ENCODE measurements at regions of chr1 and their contacts with region 1.

Region 1: GRCh38 chr1:42913426-42914091 is 45.1 kb downstream of the SLC2A1 start:
- DNase-seq: peak; percentile 72
- ATAC-seq: peak; percentile 95
- H3K4me3 Mint-ChIP-seq: no peak overlapping the region
- H3K27ac Mint-ChIP-seq: no peak overlapping the region
- H3K4me1 Mint-ChIP-seq: peaks cover 5% of the 10 kb centered on the region
- H3K27me3 Mint-ChIP-seq: no peaks in the 10 kb centered on the region
- CTCF ChIP-seq: peak; percentile 84

Region 2: GRCh38 chr1:42777852-42778251 is 135.7 kb before region 1 on chr1:
- CTCF ChIA-PET with region 1: interaction called, 12 read pairs
- POLR2A ChIA-PET with region 1: interaction called, 3 read pairs
- intact Hi-C with region 1: no loop called
- DNase-seq: peak; percentile 56
- ATAC-seq: peak; percentile 82
- H3K4me3 Mint-ChIP-seq: no peak overlapping the region
- H3K27ac Mint-ChIP-seq: no peak overlapping the region
- H3K4me1 Mint-ChIP-seq: peaks cover 28% of the 10 kb centered on the region
- H3K27me3 Mint-ChIP-seq: no peaks in the 10 kb centered on the region
- CTCF ChIP-seq: peak; percentile 76

Region 3: DNA sequence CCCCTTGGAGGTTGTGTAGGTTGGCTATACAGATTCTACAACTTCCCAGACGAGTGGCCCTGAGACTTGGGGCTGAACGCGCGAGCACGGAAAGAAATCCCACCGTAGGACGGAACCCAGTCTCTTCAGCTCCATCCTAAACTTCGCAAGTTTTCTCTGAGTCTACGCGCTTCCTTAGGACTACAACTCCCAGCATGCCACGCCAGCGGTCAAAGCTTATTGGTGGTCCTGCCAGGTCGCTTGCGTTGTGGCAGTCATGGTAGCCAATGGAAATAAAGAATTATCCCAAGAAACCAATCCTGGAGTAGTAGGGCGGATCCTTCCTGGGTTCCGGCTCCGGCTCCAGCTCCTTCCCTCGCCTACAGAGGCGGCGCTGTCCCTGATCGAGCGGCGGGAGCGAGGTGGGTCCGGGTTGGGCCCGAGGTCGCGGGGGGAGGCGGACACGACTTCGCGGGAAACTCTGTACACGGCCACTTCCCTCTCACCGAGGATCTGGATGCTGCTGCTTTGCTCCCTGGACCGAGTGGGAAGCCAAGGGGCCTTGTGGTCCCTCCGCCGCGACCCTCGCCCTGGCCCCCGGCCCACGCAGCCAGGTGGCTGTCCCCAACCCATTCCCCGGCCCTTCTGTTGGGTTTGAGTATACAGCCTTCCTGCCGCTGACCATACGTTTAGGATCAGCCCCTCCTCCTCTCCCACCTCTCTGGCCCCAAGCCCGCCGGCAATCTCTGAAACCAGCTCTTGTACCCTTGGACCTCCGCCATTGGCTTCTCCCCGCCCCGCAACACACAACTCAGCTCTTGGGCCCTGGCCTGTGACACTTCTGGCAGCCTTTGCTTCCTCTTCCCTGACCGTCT is 67.1 kb before region 1 on chr1 and contains the start of gene ZNF691:
- CTCF ChIA-PET with region 1: interaction called, 16 read pairs
- POLR2A ChIA-PET with region 1: no interaction called
- intact Hi-C with region 1: no loop called
- DNase-seq: peak; percentile 95
- ATAC-seq: peak; percentile 96
- H3K4me3 Mint-ChIP-seq: peak within 1 kb of the TSS; percentile 92
- H3K27ac Mint-ChIP-seq: peak within 1 kb of the TSS; percentile 84
- H3K4me1 Mint-ChIP-seq: peaks cover 28% of the 10 kb centered on the region
- H3K27me3 Mint-ChIP-seq: no peaks in the 10 kb centered on the region
- CTCF ChIP-seq: peak; percentile 25
- total RNA-seq, gene ZNF691: 6.9 to 7.5 TPM

Region 4: DNA sequence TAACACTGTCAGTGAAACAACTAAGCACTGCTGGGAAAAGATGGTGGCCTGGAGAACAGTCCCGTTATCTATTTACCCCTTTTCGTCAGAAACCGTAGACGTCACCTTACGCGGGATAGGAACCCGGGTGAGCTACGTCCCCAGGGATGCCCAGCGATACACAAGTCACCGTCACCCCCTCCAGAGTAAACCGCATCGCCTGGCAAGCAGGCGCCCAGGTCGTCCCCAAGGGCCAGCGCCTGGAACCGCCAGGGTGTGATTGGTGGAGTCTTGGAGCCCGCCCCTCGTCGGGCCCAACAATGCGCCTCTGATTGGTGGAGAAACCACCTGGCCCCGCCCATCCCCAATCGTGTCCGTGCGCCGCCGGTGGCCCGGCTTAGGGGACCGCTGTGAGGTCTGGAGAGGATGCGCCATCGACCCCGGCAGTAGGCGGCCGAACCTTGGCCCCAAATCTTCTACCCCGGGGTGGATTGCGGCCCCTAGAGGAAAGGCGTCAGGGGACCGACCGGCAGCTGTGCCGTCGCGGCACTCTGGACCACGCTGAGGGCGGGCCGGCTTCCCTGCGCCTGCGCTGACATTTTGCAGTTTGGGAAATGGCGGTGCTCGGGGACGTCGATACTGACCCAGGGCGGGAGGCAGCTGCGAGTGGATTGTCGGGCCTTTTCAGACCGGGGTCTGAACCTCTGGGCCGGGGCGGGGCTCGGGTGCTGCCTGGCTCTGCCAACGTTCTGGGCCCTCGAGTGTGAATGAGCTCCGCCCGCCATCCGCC is 10.7 kb after region 1 on chr1:
- CTCF ChIA-PET with region 1: interaction called, 54 read pairs
- POLR2A ChIA-PET with region 1: interaction called, 5 read pairs
- intact Hi-C with region 1: no loop called
- DNase-seq: peak; percentile 95
- ATAC-seq: peak; percentile 88
- H3K4me3 Mint-ChIP-seq: peak overlapping the region; percentile 89
- H3K27ac Mint-ChIP-seq: peak overlapping the region; percentile 94
- H3K4me1 Mint-ChIP-seq: peaks cover 39% of the 10 kb centered on the region
- H3K27me3 Mint-ChIP-seq: no peaks in the 10 kb centered on the region
- CTCF ChIP-seq: no peak

Region 5: GRCh38 chr1:43008115-43009060 is 94.8 kb after region 1 on chr1:
- CTCF ChIA-PET with region 1: no interaction called
- POLR2A ChIA-PET with region 1: no interaction called
- intact Hi-C with region 1: no loop called
- DNase-seq: no peak
- ATAC-seq: no peak
- H3K4me3 Mint-ChIP-seq: no peak overlapping the region
- H3K27ac Mint-ChIP-seq: no peak overlapping the region
- H3K4me1 Mint-ChIP-seq: no peaks in the 10 kb centered on the region
- H3K27me3 Mint-ChIP-seq: no peaks in the 10 kb centered on the region
- CTCF ChIP-seq: no peak

Region 6: DNA sequence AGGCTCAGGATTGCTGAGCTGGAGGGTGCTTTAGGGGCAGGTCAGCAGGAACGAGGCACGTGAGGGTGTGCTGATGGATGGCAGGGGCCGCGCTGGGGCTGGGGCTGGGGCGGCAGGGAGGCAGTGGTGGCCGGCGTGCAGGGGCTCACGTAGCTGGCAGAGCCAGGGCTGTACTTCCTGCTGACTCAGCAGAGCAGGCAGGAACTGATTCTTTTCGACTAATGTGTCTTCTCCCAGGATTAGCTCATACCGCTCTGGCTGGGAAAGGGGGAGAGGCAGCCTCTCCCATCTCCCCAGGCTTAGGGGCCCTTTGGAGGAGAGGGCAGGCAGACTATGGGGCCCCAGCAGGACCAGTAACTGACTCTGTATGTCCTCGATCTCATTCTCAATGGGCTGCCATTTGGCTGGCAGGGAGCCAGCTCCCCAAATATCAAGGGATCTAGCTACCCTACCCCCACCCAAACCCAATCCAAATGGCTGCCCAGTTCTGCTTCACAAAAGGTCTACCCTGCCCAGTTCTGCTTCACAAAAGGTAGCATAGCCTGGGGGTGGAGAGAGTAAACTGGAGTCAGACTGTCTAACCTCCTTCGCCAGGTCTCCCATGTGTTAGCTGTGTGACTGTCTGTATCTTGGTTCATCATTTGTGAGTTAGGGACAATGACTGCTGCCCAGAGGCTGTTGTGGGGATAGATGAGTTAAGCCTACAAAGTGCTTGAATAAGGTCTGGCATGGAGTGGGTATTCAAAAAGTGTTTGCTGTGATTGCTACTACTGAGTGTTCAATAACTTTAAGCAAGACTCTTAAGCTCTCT is 145.2 kb after region 1 on chr1:
- CTCF ChIA-PET with region 1: interaction called, 14 read pairs
- POLR2A ChIA-PET with region 1: no interaction called
- intact Hi-C with region 1: no loop called
- DNase-seq: peak; percentile 56
- ATAC-seq: peak; percentile 71
- H3K4me3 Mint-ChIP-seq: peak overlapping the region; percentile 14
- H3K27ac Mint-ChIP-seq: peak overlapping the region; percentile 64
- H3K4me1 Mint-ChIP-seq: peaks cover 18% of the 10 kb centered on the region
- H3K27me3 Mint-ChIP-seq: peaks cover 6% of the 10 kb centered on the region
- CTCF ChIP-seq: no peak

Region 7: GRCh38 chr1:43065191-43065590 is 151.6 kb after region 1 on chr1:
- CTCF ChIA-PET with region 1: interaction called, 426 read pairs
- POLR2A ChIA-PET with region 1: no interaction called
- intact Hi-C with region 1: no loop called
- DNase-seq: no peak
- ATAC-seq: no peak
- H3K4me3 Mint-ChIP-seq: no peak overlapping the region
- H3K27ac Mint-ChIP-seq: no peak overlapping the region
- H3K4me1 Mint-ChIP-seq: peaks cover 6% of the 10 kb centered on the region
- H3K27me3 Mint-ChIP-seq: no peaks in the 10 kb centered on the region
- CTCF ChIP-seq: no peak

Measured in activated CD8-positive, alpha-beta T cell treated with anti-CD3 and anti-CD28 coated beads for 36 hours (primary cell).